ENCODE measurements at regions of chr2 and their contacts with region 1.

Region 1: DNA sequence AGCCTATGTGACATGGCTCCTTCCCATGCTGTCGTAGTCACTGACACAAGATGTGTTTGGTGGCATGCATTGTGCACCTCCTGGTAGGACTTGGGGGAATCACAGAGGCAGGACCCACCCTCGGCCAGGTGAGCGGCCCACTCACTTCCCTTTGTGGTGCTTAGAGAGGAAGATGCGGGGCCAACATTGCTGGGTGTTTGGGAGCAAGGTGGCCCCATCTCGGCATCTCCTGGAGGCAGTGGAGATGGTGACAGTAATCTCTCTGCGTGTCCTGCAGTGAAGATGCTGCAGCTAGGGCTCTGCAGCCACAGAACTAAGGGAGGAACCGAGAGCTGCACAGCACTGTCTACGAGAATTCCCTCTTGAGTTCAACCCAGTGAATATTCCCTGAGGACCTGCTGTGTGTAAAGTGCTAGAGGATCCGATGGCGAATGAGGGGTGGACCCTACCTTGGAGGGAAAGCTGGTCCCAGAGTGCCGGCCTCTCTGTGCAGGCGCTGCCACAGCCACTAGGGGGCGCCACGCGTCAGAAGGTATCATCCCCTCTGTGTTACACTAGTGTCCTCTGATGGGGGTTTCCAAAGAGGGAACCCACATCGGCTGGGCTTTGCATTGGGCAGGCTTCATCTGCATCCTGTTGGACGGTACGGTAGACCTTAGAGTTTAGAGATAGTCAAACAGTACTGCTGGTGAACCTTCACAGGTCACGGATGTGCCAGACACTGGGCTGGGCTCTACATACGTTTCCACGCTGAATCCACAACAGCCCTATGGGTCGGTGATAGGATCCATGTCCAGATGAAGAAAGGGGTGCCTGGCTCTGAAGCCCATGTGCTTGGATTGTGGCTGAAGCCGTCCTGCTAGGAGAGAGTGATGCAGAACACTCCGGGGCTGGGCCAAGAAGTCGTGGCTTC is 39.2 kb downstream of the COA5 start:
- DNase-seq: peak; percentile 55 to 83 (median 68)
- ATAC-seq: peak; percentile 92
- H3K4me3 ChIP-seq: no peak overlapping the region
- H3K4me3 Mint-ChIP-seq: no peak overlapping the region
- H3K27ac ChIP-seq: no peak overlapping the region
- H3K27ac Mint-ChIP-seq: peak overlapping the region; percentile 36
- H3K4me1 ChIP-seq: no peaks in the 10 kb centered on the region
- H3K4me1 Mint-ChIP-seq: no peaks in the 10 kb centered on the region
- H3K27me3 ChIP-seq: no peaks in the 10 kb centered on the region
- H3K27me3 Mint-ChIP-seq: no peaks in the 10 kb centered on the region
- CTCF ChIP-seq: peak; percentile 93

Region 2: DNA sequence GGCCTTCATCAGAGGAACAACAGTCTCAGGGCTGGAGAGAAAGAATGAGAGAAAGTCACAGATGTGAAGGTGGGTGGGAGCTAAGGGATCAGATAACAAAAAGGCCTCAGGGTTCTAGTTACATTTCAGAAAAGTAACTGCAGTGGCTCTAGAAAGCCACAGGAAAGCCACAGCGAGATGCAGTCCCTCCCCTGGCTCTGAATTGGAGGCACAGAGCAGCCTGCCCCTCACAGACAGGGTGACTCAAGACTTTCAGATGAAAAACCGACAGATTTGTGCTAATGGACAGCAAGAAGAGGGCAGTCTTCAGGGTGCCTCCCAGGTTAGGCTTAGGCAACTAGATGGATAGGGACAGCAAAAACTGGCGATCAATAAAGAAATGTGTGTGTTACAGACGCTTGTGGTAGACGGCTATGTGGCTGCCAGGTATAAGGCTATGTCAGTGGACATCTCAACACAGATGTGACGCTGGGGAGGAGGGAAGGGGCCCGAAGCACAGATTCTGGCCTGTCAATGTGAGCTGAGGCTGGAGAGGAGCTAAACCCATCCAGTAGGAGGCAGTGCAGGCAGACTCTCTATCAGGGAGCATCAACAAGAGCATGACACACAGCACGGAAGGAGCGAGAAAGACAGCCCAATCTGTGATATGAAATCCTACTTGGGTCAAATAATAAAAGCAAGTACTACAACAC is 65.4 kb after region 1 on chr2:
- CTCF ChIA-PET with region 1: no interaction called
- POLR2A ChIA-PET with region 1: no interaction called
- intact Hi-C with region 1: loop called in 1 of 2 experiments (anchors 5 kb)
- DNase-seq: peak in 10 of 14 experiments; percentile 28 to 76 (median 48)
- ATAC-seq: peak; percentile 60
- H3K4me3 ChIP-seq: no peak overlapping the region
- H3K4me3 Mint-ChIP-seq: no peak overlapping the region
- H3K27ac ChIP-seq: peak overlapping the region; percentile 9 to 25
- H3K27ac Mint-ChIP-seq: peak overlapping the region; percentile 83
- H3K4me1 ChIP-seq: peaks cover 31% of the 10 kb centered on the region
- H3K4me1 Mint-ChIP-seq: peaks cover 40% of the 10 kb centered on the region
- H3K27me3 ChIP-seq: no peaks in the 10 kb centered on the region
- H3K27me3 Mint-ChIP-seq: no peaks in the 10 kb centered on the region
- CTCF ChIP-seq: no peak

Region 3: DNA sequence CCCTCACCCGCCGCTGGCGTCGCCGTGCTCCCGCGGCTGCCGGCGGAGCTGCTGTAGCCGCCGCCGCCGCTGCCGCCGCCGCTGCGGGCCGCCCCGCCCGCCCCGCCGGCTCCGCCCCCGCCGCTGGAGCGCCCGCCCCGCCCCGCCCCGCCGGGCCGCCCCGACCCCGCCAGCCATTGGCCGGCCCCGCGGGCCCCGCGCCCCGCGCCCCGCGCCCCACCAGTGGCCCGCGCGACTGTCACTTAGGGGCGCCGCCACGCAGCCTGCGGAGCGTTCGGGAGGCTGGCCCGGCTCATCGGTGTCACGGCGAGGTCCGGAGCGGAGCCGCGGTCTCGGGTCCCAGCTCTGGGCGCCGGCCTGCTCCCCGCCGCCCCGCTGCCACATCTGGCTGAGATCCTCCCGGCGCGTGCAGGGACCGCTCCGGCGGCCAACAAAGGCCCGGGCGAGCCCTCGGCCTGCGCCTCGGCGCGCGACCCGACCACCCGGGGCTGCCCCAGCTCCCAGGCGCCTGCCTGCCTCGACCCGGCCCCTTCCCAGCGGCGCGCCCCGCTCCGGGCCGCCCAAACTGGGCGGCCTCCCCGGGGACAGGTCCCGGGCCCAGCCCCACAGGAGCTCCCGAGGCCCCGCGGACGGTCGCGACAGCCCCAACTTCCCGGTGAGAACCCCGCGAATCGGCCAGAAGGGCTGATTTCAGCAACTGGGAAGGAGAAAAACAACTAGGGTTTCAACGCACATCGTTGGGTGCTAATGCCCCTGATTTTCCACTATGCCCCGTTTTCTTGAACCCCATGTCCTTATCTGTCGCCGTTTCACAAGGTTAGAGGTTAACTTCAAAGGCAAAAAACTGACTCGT is 162.1 kb after region 1 on chr2 and contains the start of gene MGAT4A:
- CTCF ChIA-PET with region 1: no interaction called
- POLR2A ChIA-PET with region 1: no interaction called
- intact Hi-C with region 1: no loop called
- DNase-seq: peak; percentile 65 to 91 (median 76)
- ATAC-seq: peak; percentile 70
- H3K4me3 ChIP-seq: peak within 1 kb of the TSS; percentile 87
- H3K4me3 Mint-ChIP-seq: peak within 1 kb of the TSS; percentile 99
- H3K27ac ChIP-seq: peak within 1 kb of the TSS; percentile 77 to 91
- H3K27ac Mint-ChIP-seq: peak within 1 kb of the TSS; percentile 100
- H3K4me1 ChIP-seq: peaks cover 50% of the 10 kb centered on the region
- H3K4me1 Mint-ChIP-seq: peaks cover 80% of the 10 kb centered on the region
- H3K27me3 ChIP-seq: no peaks in the 10 kb centered on the region
- H3K27me3 Mint-ChIP-seq: peaks cover 4% of the 10 kb centered on the region
- CTCF ChIP-seq: no peak
- total RNA-seq, gene MGAT4A: 200 to 204 TPM

Region 4: GRCh38 chr2:99066075-99066958 is 497.2 kb after region 1 on chr2:
- CTCF ChIA-PET with region 1: interaction called, 4 read pairs
- POLR2A ChIA-PET with region 1: no interaction called
- intact Hi-C with region 1: loop called (anchors 5 kb)
- DNase-seq: peak in 7 of 14 experiments; percentile 3 to 76 (median 52)
- ATAC-seq: peak; percentile 89
- H3K4me3 ChIP-seq: no peak overlapping the region
- H3K4me3 Mint-ChIP-seq: no peak overlapping the region
- H3K27ac ChIP-seq: peak overlapping the region; percentile 43 to 72
- H3K27ac Mint-ChIP-seq: no peak overlapping the region
- H3K4me1 ChIP-seq: peaks cover 3% of the 10 kb centered on the region
- H3K4me1 Mint-ChIP-seq: peaks cover 5% of the 10 kb centered on the region
- H3K27me3 ChIP-seq: no peaks in the 10 kb centered on the region
- H3K27me3 Mint-ChIP-seq: no peaks in the 10 kb centered on the region
- CTCF ChIP-seq: peak; percentile 7

Measured in CD4-positive, alpha-beta T cell (primary cell).